ENCODE measurements at regions of chr18 and their contacts with region 1.

Region 1: GRCh38 chr18:58768293-58768974 is 96.2 kb upstream of the ZNF532 start:
- DNase-seq: peak; percentile 82
- H3K4me3 ChIP-seq: peak overlapping the region; percentile 33
- H3K27ac ChIP-seq: no peak overlapping the region
- H3K4me1 ChIP-seq: peaks cover 19% of the 10 kb centered on the region
- H3K27me3 ChIP-seq: no peaks in the 10 kb centered on the region
- CTCF ChIP-seq: peak; percentile 90

Region 2: DNA sequence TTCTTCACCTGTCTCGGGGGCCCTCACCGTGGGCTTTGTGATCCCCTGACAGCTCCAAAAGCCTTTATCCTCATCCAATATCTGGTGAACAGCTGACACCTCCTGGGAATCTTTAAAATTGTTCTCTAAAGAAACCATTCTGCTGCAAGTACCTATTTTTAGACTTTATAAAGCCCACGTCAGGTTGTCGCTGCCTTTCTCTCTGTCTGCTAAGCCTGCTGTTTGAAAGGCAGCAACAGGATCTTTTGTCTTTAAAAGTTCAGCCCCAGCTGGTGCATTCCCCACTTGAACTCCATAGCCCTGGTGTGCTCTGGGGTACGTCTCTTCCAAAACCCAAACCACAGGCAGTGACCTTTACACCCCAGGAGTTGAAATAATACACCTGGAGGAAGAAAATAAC is 579.4 kb before region 1 on chr18:
- CTCF ChIA-PET with region 1: no interaction called
- POLR2A ChIA-PET with region 1: no interaction called
- intact Hi-C with region 1: no loop called
- DNase-seq: no peak
- H3K4me3 ChIP-seq: no peak overlapping the region
- H3K27ac ChIP-seq: no peak overlapping the region
- H3K4me1 ChIP-seq: peaks cover 13% of the 10 kb centered on the region
- H3K27me3 ChIP-seq: no peaks in the 10 kb centered on the region
- CTCF ChIP-seq: no peak

Region 3: GRCh38 chr18:58507880-58508279 is 260.6 kb before region 1 on chr18:
- CTCF ChIA-PET with region 1: no interaction called
- POLR2A ChIA-PET with region 1: no interaction called
- intact Hi-C with region 1: no loop called
- DNase-seq: no peak
- H3K4me3 ChIP-seq: no peak overlapping the region
- H3K27ac ChIP-seq: no peak overlapping the region
- H3K4me1 ChIP-seq: peaks cover 8% of the 10 kb centered on the region
- H3K27me3 ChIP-seq: no peaks in the 10 kb centered on the region
- CTCF ChIP-seq: no peak

Region 4: DNA sequence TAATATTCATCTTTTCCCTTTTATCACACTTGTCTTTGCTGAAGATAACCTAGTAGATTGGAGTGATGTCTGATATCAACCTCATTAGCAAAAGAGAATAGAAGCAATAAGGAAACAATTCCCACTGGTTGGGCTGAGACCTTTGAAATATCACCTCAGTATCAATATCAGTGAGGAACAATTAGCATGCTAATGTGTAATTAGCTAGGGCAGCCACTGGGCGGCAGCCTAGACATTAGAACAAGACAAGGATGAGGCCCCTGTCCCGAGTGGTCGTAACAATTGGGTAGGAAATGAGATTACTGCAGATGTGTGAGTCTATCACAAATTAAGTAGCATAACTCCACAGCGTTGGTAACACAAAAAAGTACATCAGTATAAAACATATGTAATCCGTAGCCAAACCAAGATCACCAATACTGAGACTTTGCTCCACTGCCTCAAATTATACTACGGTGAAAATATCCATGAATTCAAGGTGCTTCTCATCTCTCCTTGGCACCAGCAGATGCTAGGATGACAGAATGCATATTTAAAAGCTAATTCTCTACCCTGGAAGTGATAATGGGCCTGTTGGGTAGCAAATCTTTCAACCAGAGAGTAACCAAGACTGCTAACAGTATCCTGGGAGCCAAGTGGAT is 238.6 kb before region 1 on chr18:
- CTCF ChIA-PET with region 1: interaction called, 58 read pairs
- POLR2A ChIA-PET with region 1: no interaction called
- intact Hi-C with region 1: loop called (anchors 1 kb)
- DNase-seq: peak; percentile 77
- H3K4me3 ChIP-seq: no peak overlapping the region
- H3K27ac ChIP-seq: no peak overlapping the region
- H3K4me1 ChIP-seq: peaks cover 3% of the 10 kb centered on the region
- H3K27me3 ChIP-seq: no peaks in the 10 kb centered on the region
- CTCF ChIP-seq: peak; percentile 88

Region 5: GRCh38 chr18:58535340-58536201 is 232.9 kb before region 1 on chr18:
- CTCF ChIA-PET with region 1: interaction called, 58 read pairs
- POLR2A ChIA-PET with region 1: no interaction called
- intact Hi-C with region 1: no loop called
- DNase-seq: no peak
- H3K4me3 ChIP-seq: no peak overlapping the region
- H3K27ac ChIP-seq: no peak overlapping the region
- H3K4me1 ChIP-seq: no peaks in the 10 kb centered on the region
- H3K27me3 ChIP-seq: no peaks in the 10 kb centered on the region
- CTCF ChIP-seq: no peak

Region 6: GRCh38 chr18:58671111-58671631 is 97.3 kb before region 1 on chr18 and contains the start of gene MALT1:
- CTCF ChIA-PET with region 1: interaction called, 11 read pairs
- POLR2A ChIA-PET with region 1: no interaction called
- intact Hi-C with region 1: no loop called
- DNase-seq: peak; percentile 96
- H3K4me3 ChIP-seq: peak within 1 kb of the TSS; percentile 81
- H3K27ac ChIP-seq: peak within 1 kb of the TSS; percentile 88
- H3K4me1 ChIP-seq: peaks cover 28% of the 10 kb centered on the region
- H3K27me3 ChIP-seq: no peaks in the 10 kb centered on the region
- CTCF ChIP-seq: no peak
- total RNA-seq, gene MALT1: 23.0 and 24.4 TPM in 2 replicates

Region 7: DNA sequence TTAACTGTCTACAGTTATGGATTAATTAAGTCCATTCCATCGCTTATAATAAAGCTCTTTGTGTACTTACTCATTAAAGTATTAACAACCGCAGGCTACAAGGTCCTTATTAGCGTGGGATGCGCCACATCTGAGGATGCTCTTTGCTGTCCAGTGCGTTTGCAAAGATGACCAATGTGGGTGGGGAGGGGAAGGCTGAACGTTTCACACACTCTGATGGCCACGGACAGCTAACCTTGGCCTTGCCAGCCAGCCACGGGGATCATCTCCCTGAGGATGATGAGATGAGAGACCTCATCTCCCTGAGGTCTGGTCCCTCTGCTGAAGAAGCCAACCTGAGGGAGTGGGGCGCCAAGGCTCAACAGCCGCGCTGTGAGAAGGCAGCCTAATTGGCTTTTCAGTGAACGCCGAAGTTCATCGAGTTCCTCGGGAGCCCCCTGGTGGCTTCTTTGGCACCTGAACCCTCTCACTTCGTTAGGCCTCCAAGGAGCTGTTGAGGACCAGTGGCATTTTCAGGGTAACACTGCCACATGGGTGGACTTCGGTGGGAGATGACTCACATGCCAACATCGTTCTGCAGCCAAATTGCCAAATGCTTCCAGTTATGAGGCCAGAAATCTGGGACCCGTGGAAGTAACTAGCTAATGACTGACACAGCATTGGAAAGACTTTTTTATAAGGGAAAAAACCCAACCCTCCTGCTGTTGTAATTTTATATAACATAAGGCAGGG is 301.9 kb after region 1 on chr18:
- CTCF ChIA-PET with region 1: interaction called, 40 read pairs
- POLR2A ChIA-PET with region 1: no interaction called
- intact Hi-C with region 1: loop called (anchors 1 kb)
- DNase-seq: peak; percentile 94
- H3K4me3 ChIP-seq: no peak overlapping the region
- H3K27ac ChIP-seq: no peak overlapping the region
- H3K4me1 ChIP-seq: peaks cover 4% of the 10 kb centered on the region
- H3K27me3 ChIP-seq: no peaks in the 10 kb centered on the region
- CTCF ChIP-seq: peak; percentile 96

Region 8: GRCh38 chr18:59085797-59086196 is 317.4 kb after region 1 on chr18:
- CTCF ChIA-PET with region 1: interaction called, 11 read pairs
- POLR2A ChIA-PET with region 1: no interaction called
- intact Hi-C with region 1: no loop called
- DNase-seq: no peak
- H3K4me3 ChIP-seq: no peak overlapping the region
- H3K27ac ChIP-seq: no peak overlapping the region
- H3K4me1 ChIP-seq: peaks cover 28% of the 10 kb centered on the region
- H3K27me3 ChIP-seq: no peaks in the 10 kb centered on the region
- CTCF ChIP-seq: no peak

Measured in A673 (cell line).